Activated CD4-positive, alpha-beta T cell treated with anti-CD3 and anti-CD28 coated beads for 36 hours (primary cell): ENCODE measurements at regions of chr2 and their contacts with region 1.

Region 1: DNA sequence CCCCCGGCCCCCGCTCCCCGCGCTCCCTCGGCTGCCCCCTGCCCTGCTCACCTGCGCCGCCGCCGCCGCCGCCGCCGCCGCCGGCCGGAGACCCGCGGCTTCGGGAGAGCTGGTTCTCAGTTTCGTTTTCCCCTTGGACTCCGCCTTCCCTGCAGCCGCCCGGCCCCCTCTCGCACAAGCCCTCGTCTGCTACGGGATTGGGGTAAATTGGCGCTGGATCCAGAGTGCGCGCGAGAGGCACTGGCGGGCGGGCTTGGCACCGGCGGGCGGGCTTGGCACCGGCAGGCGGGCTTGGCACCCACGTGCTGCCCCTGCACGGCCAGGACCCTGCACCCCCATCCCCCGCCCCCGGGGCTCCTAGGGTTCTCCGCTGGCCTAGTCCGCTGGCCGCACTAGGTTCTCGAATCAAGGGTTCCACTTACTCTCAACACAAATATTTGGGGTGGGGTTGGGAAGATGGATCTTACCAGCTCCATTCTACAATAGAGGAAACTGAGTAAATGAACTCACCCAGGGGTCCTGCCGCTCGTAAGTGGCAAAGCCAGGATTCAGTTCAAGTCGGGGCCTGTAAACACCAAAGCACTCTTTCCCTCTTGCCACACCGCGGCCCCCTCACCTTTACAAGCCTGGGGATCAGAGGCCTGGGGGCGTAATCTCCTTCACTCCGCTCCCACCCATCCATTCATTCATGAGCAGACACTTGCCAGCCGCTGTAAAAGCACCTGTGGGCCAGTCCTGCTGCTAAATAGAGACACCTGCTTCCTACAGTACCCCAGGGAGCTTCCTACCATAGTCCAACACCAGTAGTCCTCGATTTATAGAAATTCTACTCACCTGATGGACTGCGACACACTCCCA is at the start of gene EIF2AK2:
- DNase-seq: peak; percentile 89
- ATAC-seq: peak; percentile 93
- H3K4me3 Mint-ChIP-seq: peak within 1 kb of the TSS; percentile 85
- H3K27ac Mint-ChIP-seq: peak within 1 kb of the TSS; percentile 89
- H3K4me1 Mint-ChIP-seq: peaks cover 40% of the 10 kb centered on the region
- H3K27me3 Mint-ChIP-seq: no peaks in the 10 kb centered on the region
- total RNA-seq, gene EIF2AK2: 66.4 to 70.6 TPM

Region 2: GRCh38 chr2:36748166-36748565 is 408.9 kb before region 1 on chr2:
- CTCF ChIA-PET with region 1: no interaction called
- POLR2A ChIA-PET with region 1: no interaction called
- intact Hi-C with region 1: no loop called
- DNase-seq: no peak
- ATAC-seq: no peak
- H3K4me3 Mint-ChIP-seq: no peak overlapping the region
- H3K27ac Mint-ChIP-seq: no peak overlapping the region
- H3K4me1 Mint-ChIP-seq: no peaks in the 10 kb centered on the region
- H3K27me3 Mint-ChIP-seq: peaks cover 44% of the 10 kb centered on the region

Region 3: DNA sequence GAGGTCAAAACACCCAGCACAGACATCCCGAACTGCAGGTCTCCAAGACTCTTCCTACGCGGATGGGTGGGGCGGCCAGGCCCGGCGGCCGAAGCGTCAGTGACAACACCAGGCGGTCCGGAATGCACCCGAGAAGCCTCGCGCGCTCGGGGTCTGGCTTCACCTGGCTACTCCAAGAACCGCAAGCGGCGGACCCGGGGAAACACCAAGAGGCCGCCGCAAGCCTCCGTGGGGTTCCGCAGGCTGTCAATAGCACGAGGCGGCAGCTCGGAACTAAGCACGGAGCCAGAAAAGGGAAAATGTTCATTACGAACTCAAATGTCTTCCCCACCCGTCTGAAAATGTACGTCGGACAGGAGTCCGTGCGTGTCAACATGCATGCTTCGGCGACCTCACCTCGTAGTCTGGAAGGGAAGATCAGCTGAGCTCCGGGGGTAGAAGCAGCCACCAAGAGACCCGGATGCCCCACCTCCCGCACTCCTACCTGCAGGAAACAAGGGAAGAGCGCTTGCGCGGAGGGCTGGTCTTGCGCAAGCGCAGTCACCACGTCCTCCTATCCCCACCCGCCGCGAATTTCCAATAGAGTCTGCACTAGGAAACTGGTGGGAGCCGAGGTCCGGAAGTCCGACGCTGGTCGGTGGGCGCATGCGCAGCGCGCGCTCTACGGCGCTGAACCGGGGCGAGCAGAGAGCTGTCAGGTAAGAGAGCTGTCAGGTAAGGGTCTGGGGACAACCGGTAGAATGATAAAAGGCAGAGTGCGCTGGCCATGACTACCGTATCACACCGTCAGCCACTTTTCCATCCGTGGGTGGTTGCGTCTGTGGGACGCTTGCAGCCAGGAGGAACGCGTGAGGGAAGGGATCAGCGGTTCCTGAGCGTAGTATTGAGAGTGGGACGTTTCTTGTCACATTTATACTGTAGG is 73.0 kb before region 1 on chr2 and contains the starts of genes GPATCH11 and HEATR5B:
- CTCF ChIA-PET with region 1: no interaction called
- POLR2A ChIA-PET with region 1: no interaction called
- intact Hi-C with region 1: loop called in 1 of 2 experiments (anchors 1 kb)
- DNase-seq: peak; percentile 94
- ATAC-seq: peak; percentile 89
- H3K4me3 Mint-ChIP-seq: no peak within 1 kb of the TSS
- H3K27ac Mint-ChIP-seq: no peak within 1 kb of the TSS
- H3K4me1 Mint-ChIP-seq: peaks cover 44% of the 10 kb centered on the region
- H3K27me3 Mint-ChIP-seq: no peaks in the 10 kb centered on the region
- total RNA-seq, gene GPATCH11: 9.6 to 10.0 TPM
- total RNA-seq, gene HEATR5B: 15.2 TPM

Region 4: GRCh38 chr2:37196320-37197195 is 39.5 kb after region 1 on chr2 and contains the start of gene CEBPZOS:
- CTCF ChIA-PET with region 1: interaction called, 5 read pairs
- POLR2A ChIA-PET with region 1: no interaction called
- intact Hi-C with region 1: loop called in 1 of 2 experiments (anchors 1 kb)
- DNase-seq: peak; percentile 93
- ATAC-seq: peak; percentile 84
- H3K4me3 Mint-ChIP-seq: peak within 1 kb of the TSS; percentile 86
- H3K27ac Mint-ChIP-seq: peak within 1 kb of the TSS; percentile 95
- H3K4me1 Mint-ChIP-seq: peaks cover 33% of the 10 kb centered on the region
- H3K27me3 Mint-ChIP-seq: no peaks in the 10 kb centered on the region
- total RNA-seq, gene CEBPZOS: 46.6 to 49.8 TPM